ENCODE measurements at regions of chr19 and their contacts with region 1.

Region 1: DNA sequence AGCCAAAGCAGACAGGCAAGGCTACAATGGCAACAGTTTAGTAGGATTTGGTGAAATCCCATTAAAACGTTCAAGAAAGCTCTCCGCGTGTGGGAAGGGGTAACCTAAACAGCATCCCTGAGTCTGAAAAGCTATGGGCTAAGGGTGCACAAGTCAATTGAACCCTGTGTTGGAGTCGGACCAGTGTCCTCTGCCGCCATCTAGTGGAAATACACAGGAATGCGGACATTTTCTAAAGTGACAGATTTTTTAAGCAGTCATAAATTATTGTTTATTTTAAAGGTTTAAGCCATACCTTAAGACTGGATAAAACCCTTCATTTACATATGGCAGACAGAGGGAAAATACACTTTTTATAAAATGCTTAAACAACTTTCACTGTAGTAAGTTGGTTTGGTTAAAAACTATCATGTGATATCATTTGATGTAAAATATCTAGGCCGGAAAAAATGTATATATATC is 26.5 kb upstream of the LSM14A start:
- DNase-seq: peak in 1 of 2 donors; percentile 34
- ATAC-seq: peak; percentile 59

Region 2: DNA sequence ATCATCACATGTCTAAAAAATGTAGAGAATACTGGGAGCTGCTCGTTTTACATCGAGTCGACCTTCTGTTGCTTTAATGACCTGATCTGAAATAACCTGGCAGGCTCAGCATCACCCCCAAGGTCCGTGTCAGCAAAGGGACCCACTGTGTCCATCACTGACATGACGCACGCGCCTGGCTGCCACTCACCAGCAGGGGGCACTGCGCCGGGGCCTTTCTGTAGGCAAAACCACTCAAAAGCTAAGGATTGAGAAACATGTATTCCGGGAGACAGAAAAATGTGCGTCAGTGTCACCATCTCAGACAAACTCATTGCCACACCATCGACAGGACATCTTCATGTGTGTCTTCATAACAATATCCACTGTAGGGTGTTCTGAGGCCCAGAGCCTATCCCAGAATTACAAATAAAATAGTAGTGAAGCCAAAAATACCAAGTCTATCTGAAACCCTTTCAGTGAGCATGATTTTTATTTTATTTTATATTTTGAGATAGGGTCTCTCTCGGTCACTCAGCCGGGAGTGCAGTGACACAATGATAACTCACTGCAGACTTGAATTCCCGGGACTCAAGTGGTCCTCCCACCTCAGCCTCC is 103.7 kb before region 1 on chr19:
- intact Hi-C with region 1: loop called in 1 of 2 experiments (anchors 10 kb)
- DNase-seq: peak; percentile 38 to 70
- ATAC-seq: peak; percentile 33

Measured in left colon (tissue), 2 donors.